ENCODE measurements at regions of chr2 and their contacts with region 1.

Region 1: DNA sequence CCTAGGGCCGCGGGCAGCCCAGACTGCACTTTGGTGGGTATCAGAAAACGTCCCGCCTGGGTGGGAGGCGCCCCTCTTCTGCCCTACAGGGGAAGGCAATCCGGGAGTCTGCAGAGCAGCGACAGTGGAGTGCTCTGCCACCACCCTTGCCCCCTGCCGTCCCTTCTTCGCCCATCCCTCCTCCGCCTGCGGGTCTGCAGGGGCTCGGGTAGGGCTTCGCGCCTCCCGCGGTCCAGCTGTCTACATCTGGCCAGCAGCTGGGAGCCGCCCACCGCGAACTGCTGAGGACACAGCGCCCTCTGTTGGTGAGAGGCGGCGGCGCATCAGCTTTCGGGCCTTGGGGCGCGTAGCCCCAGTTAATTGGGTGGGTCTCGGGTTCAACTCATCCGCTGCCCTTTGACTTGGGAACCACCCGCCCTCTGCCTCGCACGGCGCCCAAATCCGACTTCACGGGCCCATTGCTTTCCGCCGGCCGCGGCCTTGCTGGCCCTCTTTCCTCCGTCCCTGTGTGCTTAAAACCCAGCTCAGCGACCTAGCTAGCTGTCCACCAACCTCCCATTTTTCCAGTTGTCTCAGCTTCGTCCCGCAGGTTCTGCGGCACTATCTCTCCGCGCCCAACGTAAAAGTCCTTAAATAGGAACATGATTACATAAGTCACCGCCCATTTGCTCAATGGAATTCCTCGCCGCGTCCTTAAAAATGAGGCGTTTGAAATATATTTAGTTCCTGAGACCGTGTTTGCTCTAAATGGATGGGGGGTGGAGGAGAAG is 17.6 kb downstream of the WNT10A start:
- DNase-seq: no peak
- H3K4me3 ChIP-seq: no peak overlapping the region
- H3K27me3 ChIP-seq: peaks cover 35% of the 10 kb centered on the region
- CTCF ChIP-seq: peak; percentile 98

Region 2: GRCh38 chr2:218691234-218691633 is 207.1 kb before region 1 on chr2:
- CTCF ChIA-PET with region 1: no interaction called
- POLR2A ChIA-PET with region 1: no interaction called
- DNase-seq: no peak
- H3K4me3 ChIP-seq: no peak overlapping the region
- H3K27me3 ChIP-seq: no peaks in the 10 kb centered on the region
- CTCF ChIP-seq: no peak

Region 3: DNA sequence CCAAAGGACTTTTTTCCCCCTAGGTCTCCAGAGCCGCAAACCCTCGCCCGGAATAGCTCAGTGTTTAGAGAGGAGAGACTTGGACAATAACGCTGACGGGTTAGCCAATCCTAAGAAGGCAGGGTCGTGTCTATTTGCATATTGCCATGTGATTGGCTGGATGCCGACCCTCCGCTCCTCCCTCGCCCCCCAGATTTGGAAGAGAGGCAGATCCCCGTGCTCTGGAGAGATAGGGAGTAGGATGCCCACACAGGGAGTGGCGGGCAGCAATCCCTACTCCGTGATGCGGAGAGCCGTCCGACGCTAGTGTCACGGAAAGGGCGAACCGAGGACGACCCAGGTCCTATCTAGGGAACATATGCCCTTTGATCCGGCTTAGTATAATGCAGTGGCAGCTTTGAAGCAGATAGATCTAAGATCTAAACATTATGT is 37.3 kb before region 1 on chr2:
- CTCF ChIA-PET with region 1: interaction called, 13 read pairs
- POLR2A ChIA-PET with region 1: no interaction called
- DNase-seq: no peak
- H3K4me3 ChIP-seq: no peak overlapping the region
- H3K27me3 ChIP-seq: peaks cover 54% of the 10 kb centered on the region
- CTCF ChIP-seq: no peak

Region 4: DNA sequence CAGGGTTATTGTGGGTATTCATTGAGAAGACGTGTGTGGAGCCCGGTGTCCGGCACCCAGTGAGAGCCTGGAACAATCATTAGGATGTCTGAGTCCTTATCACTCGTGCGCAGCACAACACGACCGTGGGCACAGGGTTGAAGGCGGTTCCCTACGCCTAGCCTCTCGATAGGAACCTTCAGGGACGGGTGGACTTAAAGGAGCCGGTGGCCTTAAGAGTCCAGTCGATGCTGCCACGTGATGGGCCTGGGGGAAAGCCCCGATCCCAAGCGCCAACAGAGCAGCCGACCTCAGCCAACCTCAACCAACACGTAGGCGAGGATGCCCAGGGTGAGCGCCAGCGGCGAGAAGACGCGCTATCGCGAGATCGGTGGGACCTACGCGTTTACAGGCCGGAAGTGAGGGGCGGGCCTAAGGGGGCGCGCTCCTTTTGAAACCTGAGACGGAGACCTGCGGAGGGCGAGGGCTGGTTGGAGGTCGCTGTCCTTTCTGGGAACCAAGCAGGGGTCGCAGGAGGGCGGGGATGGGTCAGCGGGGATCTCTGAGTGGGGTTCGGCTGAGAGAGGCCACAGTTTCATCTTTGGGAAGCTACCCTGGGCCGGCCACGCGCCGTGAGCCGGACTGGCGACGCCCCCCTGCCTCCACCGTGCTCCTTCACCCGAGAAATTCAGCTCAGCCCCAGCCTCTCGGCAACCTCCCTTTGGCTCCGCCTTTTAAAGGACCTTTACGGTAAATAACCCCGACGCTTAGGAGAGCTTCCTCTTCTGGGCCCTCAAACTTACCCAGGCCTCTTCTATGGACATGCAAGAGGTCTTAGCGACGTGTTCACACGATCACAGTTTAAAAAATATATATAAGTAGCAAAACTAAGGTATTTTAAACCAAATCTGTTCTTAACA is 10.7 kb after region 1 on chr2:
- CTCF ChIA-PET with region 1: interaction called, 31 read pairs
- POLR2A ChIA-PET with region 1: no interaction called
- DNase-seq: peak; percentile 16
- H3K4me3 ChIP-seq: peak overlapping the region; percentile 62
- H3K27me3 ChIP-seq: peaks cover 5% of the 10 kb centered on the region
- CTCF ChIP-seq: no peak